ENCODE measurements at regions of chr9 and their contacts with region 1.

Region 1: GRCh38 chr9:91131433-91131839 is 230.3 kb downstream of the AUH start:
- DNase-seq: peak; percentile 92
- H3K4me3 Mint-ChIP-seq: peak overlapping the region; percentile 32
- H3K27ac Mint-ChIP-seq: peak overlapping the region; percentile 90
- H3K4me1 Mint-ChIP-seq: peaks cover 26% of the 10 kb centered on the region
- H3K27me3 Mint-ChIP-seq: peaks cover 4% of the 10 kb centered on the region

Region 2: GRCh38 chr9:91071185-91071990 is 60.0 kb before region 1 on chr9:
- CTCF ChIA-PET with region 1: interaction called, 8 read pairs
- POLR2A ChIA-PET with region 1: interaction called, 9 read pairs
- intact Hi-C with region 1: loop called (anchors 1 kb)
- DNase-seq: peak; percentile 88
- H3K4me3 Mint-ChIP-seq: peak overlapping the region; percentile 9
- H3K27ac Mint-ChIP-seq: peak overlapping the region; percentile 85
- H3K4me1 Mint-ChIP-seq: peaks cover 18% of the 10 kb centered on the region
- H3K27me3 Mint-ChIP-seq: peaks cover 7% of the 10 kb centered on the region

Region 3: GRCh38 chr9:91082731-91083130 is 48.7 kb before region 1 on chr9:
- CTCF ChIA-PET with region 1: no interaction called
- POLR2A ChIA-PET with region 1: no interaction called
- intact Hi-C with region 1: no loop called
- DNase-seq: no peak
- H3K4me3 Mint-ChIP-seq: no peak overlapping the region
- H3K27ac Mint-ChIP-seq: peak overlapping the region; percentile 1
- H3K4me1 Mint-ChIP-seq: peaks cover 24% of the 10 kb centered on the region
- H3K27me3 Mint-ChIP-seq: peaks cover 2% of the 10 kb centered on the region

Region 4: GRCh38 chr9:91111876-91112275 is 19.6 kb before region 1 on chr9:
- CTCF ChIA-PET with region 1: interaction called, 5 read pairs
- POLR2A ChIA-PET with region 1: no interaction called
- intact Hi-C with region 1: loop called (anchors 2 kb)
- DNase-seq: no peak
- H3K4me3 Mint-ChIP-seq: no peak overlapping the region
- H3K27ac Mint-ChIP-seq: no peak overlapping the region
- H3K4me1 Mint-ChIP-seq: peaks cover 12% of the 10 kb centered on the region
- H3K27me3 Mint-ChIP-seq: peaks cover 32% of the 10 kb centered on the region

Region 5: GRCh38 chr9:91193658-91194391 is 62.4 kb after region 1 on chr9:
- CTCF ChIA-PET with region 1: no interaction called
- POLR2A ChIA-PET with region 1: interaction called, 20 read pairs
- intact Hi-C with region 1: loop called (anchors 1 kb)
- DNase-seq: peak; percentile 92
- H3K4me3 Mint-ChIP-seq: peak overlapping the region; percentile 77
- H3K27ac Mint-ChIP-seq: peak overlapping the region; percentile 98
- H3K4me1 Mint-ChIP-seq: peaks cover 62% of the 10 kb centered on the region
- H3K27me3 Mint-ChIP-seq: no peaks in the 10 kb centered on the region